Activated CD4-positive, alpha-beta T cell treated with anti-CD3 and anti-CD28 coated beads, Interleukin-2, amount 10 ng/mL, durations not matched to agents 24 days and 14 days (primary cell): ENCODE measurements at regions of chr7 and their contacts with region 1.

Region 1: GRCh38 chr7:25069900-25070443 is 55.1 kb downstream of the CYCS start:
- DNase-seq: peak; percentile 85
- H3K4me3 Mint-ChIP-seq: no peak overlapping the region
- H3K27ac Mint-ChIP-seq: no peak overlapping the region
- H3K4me1 Mint-ChIP-seq: peaks cover 19% of the 10 kb centered on the region
- H3K27me3 Mint-ChIP-seq: no peaks in the 10 kb centered on the region

Region 2: GRCh38 chr7:24812310-24812945 is 257.5 kb before region 1 on chr7:
- intact Hi-C with region 1: loop called (anchors 1 kb)
- DNase-seq: peak; percentile 83
- H3K4me3 Mint-ChIP-seq: no peak overlapping the region
- H3K27ac Mint-ChIP-seq: no peak overlapping the region
- H3K4me1 Mint-ChIP-seq: no peaks in the 10 kb centered on the region
- H3K27me3 Mint-ChIP-seq: no peaks in the 10 kb centered on the region

Region 3: DNA sequence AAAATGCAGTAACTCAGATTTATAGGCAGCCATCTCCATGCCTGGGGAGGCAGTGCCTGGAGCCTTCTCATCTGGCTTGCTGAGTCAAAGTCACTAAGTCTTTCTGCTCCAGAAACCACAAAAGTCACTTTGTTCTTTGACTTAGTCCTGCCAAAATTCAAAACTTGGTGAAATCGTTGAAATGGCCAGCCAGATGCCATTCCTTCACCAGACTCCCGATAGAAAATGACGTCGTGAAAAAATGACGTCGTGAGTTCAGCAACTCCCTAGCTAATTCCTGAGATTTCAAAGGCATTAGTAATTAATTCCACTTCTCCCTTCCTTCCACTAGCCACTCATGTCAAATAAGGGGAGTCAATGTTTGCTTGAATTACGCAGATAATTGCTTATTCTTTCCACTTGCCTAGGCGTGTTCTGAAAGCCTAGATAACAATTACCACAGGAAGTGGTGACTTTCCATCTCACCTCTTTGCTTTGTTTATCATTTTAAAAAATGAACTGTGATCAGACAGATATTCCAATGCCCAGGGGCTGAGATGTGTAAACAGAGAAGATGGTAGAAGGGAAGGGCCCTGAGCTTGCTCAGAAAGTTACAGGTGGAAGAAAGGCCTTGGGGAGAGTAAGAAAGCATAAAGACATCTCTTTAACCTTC is 41.5 kb before region 1 on chr7:
- intact Hi-C with region 1: loop called (anchors 5 kb)
- DNase-seq: peak; percentile 82
- H3K4me3 Mint-ChIP-seq: peak overlapping the region; percentile 48
- H3K27ac Mint-ChIP-seq: peak overlapping the region; percentile 87
- H3K4me1 Mint-ChIP-seq: peaks cover 45% of the 10 kb centered on the region
- H3K27me3 Mint-ChIP-seq: peaks cover 10% of the 10 kb centered on the region

Region 4: GRCh38 chr7:25287291-25287690 is 217.3 kb after region 1 on chr7:
- intact Hi-C with region 1: no loop called
- DNase-seq: no peak
- H3K4me3 Mint-ChIP-seq: no peak overlapping the region
- H3K27ac Mint-ChIP-seq: no peak overlapping the region
- H3K4me1 Mint-ChIP-seq: no peaks in the 10 kb centered on the region
- H3K27me3 Mint-ChIP-seq: peaks cover 12% of the 10 kb centered on the region